HCT116 (cell line): ENCODE measurements at regions of chr10 and their contacts with region 1.

Region 1: GRCh38 chr10:93352638-93353383 is 129.3 kb downstream of the MYOF start:
- DNase-seq: no peak
- ATAC-seq: peak; percentile 62
- H3K4me3 ChIP-seq: no peak overlapping the region
- H3K27ac ChIP-seq: no peak overlapping the region; the same call in 1 of the 2 replicates
- H3K4me1 ChIP-seq: no peaks in the 10 kb centered on the region
- H3K27me3 ChIP-seq: no peaks in the 10 kb centered on the region
- CTCF ChIP-seq: peak; percentile 44 to 84 (median 46); a peak in 5 of 6 replicates
- POLR2A ChIP-seq: no peak
- RAD21 ChIP-seq: peak; percentile 56

Region 2: GRCh38 chr10:92886334-92886961 is 466.4 kb before region 1 on chr10:
- CTCF ChIA-PET with region 1: interaction called, 3 read pairs
- POLR2A ChIA-PET with region 1: no interaction called
- RAD21 ChIA-PET with region 1: no interaction called
- intact Hi-C with region 1: loop called (anchors 1 kb)
- DNase-seq: no peak
- ATAC-seq: peak; percentile 47; the same call in 1 of the 2 replicates
- H3K4me3 ChIP-seq: no peak overlapping the region
- H3K27ac ChIP-seq: no peak overlapping the region
- H3K4me1 ChIP-seq: peaks cover under 1 to 3% of the 10 kb centered on the region in 2 experiments
- H3K27me3 ChIP-seq: no peaks in the 10 kb centered on the region
- CTCF ChIP-seq: no peak
- POLR2A ChIP-seq: no peak
- RAD21 ChIP-seq: no peak

Region 3: DNA sequence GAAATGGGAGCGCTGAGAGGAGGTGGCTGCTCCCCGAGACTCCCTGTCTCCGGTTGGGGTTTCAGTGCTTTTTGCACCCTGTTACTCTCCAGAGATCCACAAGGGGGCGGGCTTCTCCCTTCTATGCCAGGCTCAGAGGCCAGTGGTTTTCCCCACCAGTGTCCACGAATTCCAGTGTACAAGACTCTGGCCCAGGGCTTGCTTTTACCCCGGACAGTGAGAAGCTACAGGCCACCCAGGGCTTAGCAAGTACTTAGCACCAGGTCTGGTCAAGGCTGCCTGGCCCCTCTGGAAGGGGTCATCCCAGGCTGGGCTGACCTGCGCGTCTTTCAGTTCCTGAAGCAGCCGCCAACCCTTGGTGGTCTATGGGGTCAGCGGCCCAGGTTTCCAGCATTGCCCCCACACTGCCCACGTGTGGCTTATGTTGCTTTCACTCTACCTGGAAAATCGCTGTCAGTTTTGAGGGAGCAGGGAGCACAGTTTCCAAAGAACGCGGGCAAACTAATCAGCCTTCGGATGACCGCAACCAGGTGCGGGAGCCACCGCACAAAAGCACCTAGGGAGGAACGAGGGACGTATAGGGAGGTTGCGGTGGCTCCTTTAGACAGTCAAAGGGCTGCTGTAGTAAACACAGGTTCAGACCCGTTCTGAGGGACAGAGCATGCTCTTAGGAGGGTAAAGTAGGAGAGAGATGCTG is 272.3 kb before region 1 on chr10:
- CTCF ChIA-PET with region 1: interaction called, 4 read pairs
- POLR2A ChIA-PET with region 1: no interaction called
- RAD21 ChIA-PET with region 1: no interaction called
- intact Hi-C with region 1: loop called (anchors 5 kb)
- DNase-seq: peak; percentile 18
- ATAC-seq: peak; percentile 94
- H3K4me3 ChIP-seq: peak overlapping the region in 1 of 2 experiments; percentile 28; a peak in 1 of 4 replicates
- H3K27ac ChIP-seq: no peak overlapping the region
- H3K4me1 ChIP-seq: peaks cover 0 to 10% of the 10 kb centered on the region in 2 experiments; a peak in 1 of 4 replicates
- H3K27me3 ChIP-seq: no peaks in the 10 kb centered on the region
- CTCF ChIP-seq: peak; percentile 73 to 90 (median 82)
- POLR2A ChIP-seq: no peak
- RAD21 ChIP-seq: peak; percentile 93

Region 4: DNA sequence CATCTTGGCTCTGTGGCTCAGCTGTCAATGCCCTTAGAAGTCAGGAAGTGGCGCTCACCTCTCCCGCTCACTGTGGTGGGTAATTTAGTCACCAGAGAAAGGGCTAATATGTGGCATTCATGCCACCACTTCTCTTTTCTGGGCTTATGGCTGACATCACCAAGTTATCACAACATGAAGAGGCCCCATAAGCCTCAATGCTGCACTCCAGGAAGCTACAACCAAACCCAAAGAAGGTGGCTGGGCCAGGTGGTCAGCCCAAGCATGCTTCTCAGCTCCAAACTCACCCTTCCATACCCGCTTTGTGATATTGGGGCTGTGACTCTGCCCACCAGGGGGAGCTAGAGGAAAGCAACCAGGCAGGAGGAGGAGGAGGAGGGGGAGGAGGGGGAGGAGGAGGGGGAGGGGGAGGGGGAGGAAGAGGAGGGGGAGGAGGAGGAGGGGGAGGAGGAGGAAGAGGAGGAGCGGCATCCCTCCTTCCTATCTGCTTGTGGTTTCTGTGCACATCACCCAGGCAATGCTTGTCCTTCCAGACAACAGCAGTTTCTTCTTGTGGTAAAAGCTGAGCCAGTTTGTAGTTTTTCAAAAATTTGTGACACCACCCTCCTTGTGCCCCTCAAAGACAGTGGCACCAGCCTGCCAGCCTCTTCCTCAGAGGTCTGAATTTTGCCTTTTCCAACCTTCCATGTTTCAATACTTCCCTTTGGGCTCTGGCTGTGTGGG is 237.0 kb before region 1 on chr10:
- CTCF ChIA-PET with region 1: no interaction called
- POLR2A ChIA-PET with region 1: no interaction called
- RAD21 ChIA-PET with region 1: no interaction called
- intact Hi-C with region 1: loop called (anchors 5 kb)
- DNase-seq: peak; percentile 74
- ATAC-seq: peak; percentile 94
- H3K4me3 ChIP-seq: no peak overlapping the region
- H3K27ac ChIP-seq: no peak overlapping the region
- H3K4me1 ChIP-seq: peaks cover 0 to 5% of the 10 kb centered on the region in 2 experiments; a peak in 2 of 4 replicates
- H3K27me3 ChIP-seq: no peaks in the 10 kb centered on the region
- CTCF ChIP-seq: peak; percentile 47 to 70 (median 57); a peak in 5 of 6 replicates
- POLR2A ChIP-seq: no peak
- RAD21 ChIP-seq: peak; percentile 69